ENCODE measurements at regions of chr7 and their contacts with region 1.

Region 1: GRCh38 chr7:95527033-95527775 is 41.5 kb downstream of the ASB4 start:
- DNase-seq: peak; percentile 77
- H3K4me3 ChIP-seq: no peak overlapping the region; a peak in 1 of 4 replicates
- H3K27ac ChIP-seq: no peak overlapping the region
- H3K4me1 ChIP-seq: peaks cover 0 to 3% of the 10 kb centered on the region in 2 experiments; a peak in 1 of 4 replicates
- H3K27me3 ChIP-seq: peaks cover 67% of the 10 kb centered on the region
- CTCF ChIP-seq: peak; percentile 99
- EP300 ChIP-seq: no peak
- RAD21 ChIP-seq: peak; percentile 94

Region 2: DNA sequence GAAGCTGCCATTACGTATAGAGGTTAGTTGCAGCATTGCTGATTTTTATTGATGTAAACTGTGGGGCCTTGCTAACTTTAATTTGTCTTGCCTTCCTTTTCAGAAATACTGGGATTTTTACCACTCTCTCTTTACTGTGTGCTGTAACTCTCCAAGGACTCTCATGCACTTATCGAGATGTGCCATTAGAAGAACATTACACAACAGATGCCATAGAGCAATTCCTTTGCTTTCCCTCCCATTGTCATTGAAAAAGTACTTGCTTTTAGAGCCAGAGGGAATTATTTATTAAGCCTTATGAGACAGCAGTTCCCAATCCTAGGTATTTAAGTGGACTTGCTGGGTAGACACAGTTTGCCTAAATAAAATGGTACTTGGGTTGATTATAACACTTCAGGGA is 10.3 kb after region 1 on chr7:
- CTCF ChIA-PET with region 1: interaction called, 20 read pairs
- POLR2A ChIA-PET with region 1: no interaction called
- DNase-seq: no peak
- H3K4me3 ChIP-seq: no peak overlapping the region
- H3K27ac ChIP-seq: no peak overlapping the region
- H3K4me1 ChIP-seq: no peaks in the 10 kb centered on the region
- H3K27me3 ChIP-seq: peaks cover 53% of the 10 kb centered on the region; the same call in 1 of the 2 replicates
- CTCF ChIP-seq: no peak
- EP300 ChIP-seq: no peak
- RAD21 ChIP-seq: no peak

Region 3: DNA sequence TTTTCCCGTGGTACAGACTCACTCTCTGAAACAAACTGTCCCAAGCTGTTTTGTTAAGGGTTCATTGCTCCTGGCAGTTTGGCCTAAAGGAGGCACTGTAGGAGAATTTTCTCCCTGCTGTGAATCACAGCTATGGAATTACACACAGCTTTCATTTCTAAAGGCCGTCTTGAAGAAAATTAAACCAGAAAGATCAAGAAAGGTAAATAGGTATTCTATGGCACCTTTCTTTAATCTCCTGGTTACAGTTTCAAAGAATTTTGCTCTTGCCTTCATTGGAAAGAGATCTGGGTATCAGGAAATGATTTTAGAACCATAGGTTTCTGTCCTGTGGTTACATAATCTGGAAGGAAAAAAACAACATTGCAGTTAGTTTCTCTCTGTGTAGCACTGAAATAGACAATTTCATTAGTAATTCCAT is 17.9 kb after region 1 on chr7:
- CTCF ChIA-PET with region 1: interaction called, 20 read pairs
- POLR2A ChIA-PET with region 1: no interaction called
- DNase-seq: no peak
- H3K4me3 ChIP-seq: peak overlapping the region; percentile 28 to 44; a peak in 3 of 4 replicates
- H3K27ac ChIP-seq: no peak overlapping the region
- H3K4me1 ChIP-seq: peaks cover 0 to 8% of the 10 kb centered on the region in 2 experiments; a peak in 2 of 4 replicates
- H3K27me3 ChIP-seq: peaks cover 30% of the 10 kb centered on the region; the same call in 1 of the 2 replicates
- CTCF ChIP-seq: peak; percentile 95
- EP300 ChIP-seq: no peak
- RAD21 ChIP-seq: peak; percentile 57

Region 4: DNA sequence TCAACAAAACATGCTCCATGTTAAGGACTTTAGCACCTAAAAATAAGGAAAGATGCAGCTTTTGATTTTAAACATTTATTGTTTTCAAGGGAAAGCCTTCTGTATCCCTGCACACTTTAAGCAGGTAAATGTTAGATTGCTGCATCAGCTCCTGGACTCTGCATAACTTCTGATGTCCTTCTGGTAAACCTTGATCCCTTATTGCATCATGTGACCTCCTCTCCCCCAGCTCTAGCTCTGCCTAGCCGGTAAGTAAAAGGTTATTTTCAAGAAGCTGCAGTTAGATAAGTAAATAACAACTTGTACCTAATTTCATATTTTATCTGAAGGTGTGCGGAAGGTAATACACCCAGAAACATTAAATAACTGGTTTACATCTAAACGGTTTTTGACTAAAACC is 31.7 kb after region 1 on chr7:
- CTCF ChIA-PET with region 1: interaction called, 10 read pairs
- POLR2A ChIA-PET with region 1: no interaction called
- DNase-seq: no peak
- H3K4me3 ChIP-seq: no peak overlapping the region
- H3K27ac ChIP-seq: no peak overlapping the region
- H3K4me1 ChIP-seq: no peaks in the 10 kb centered on the region
- H3K27me3 ChIP-seq: peaks cover 34% of the 10 kb centered on the region
- CTCF ChIP-seq: no peak
- EP300 ChIP-seq: no peak
- RAD21 ChIP-seq: no peak

Region 5: DNA sequence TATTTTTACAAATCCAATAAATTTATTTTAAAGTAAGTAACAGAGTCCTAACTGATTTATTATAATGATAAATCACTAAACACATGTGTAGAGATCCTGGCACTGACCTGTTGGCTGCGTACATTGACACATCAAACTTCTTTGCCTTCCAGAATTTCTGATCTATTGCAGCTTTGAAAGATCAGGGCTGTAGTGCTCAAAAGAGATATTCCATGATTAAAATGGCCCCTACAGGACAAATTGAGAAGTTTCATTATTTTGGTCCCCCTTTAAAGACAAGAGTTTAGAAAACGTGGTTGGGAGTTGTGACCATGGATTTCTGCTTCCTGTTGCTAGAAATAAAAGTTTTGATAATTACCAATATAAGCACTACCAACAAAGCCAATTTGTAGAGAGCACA is 156.8 kb after region 1 on chr7:
- CTCF ChIA-PET with region 1: interaction called, 530 read pairs
- POLR2A ChIA-PET with region 1: no interaction called
- DNase-seq: no peak
- H3K4me3 ChIP-seq: no peak overlapping the region
- H3K27ac ChIP-seq: no peak overlapping the region
- H3K4me1 ChIP-seq: no peaks in the 10 kb centered on the region
- H3K27me3 ChIP-seq: no peaks in the 10 kb centered on the region; the same call in 1 of the 2 replicates
- CTCF ChIP-seq: peak; percentile 60
- EP300 ChIP-seq: no peak
- RAD21 ChIP-seq: peak; percentile 37

Region 6: DNA sequence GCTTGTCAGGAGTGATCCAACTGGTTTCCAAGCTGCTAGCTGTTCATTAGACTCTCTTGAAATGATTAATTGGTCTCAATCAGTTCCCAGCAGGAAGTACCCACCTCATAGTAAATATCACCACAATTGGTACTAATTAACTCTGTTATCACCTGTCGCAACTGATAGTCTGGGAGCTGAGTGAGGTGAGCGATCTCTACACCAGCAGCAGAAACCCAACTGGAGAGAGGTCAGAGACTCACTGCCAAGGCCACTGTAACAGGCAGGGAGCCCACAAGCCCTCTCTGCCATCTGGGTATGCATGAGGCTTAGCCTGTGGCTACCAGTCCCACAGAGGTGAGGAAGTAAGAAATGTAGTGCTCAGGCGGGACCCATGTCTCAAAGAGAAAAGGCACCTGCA is 490.7 kb after region 1 on chr7:
- CTCF ChIA-PET with region 1: no interaction called
- POLR2A ChIA-PET with region 1: no interaction called
- DNase-seq: no peak
- H3K4me3 ChIP-seq: no peak overlapping the region
- H3K27ac ChIP-seq: no peak overlapping the region
- H3K4me1 ChIP-seq: no peaks in the 10 kb centered on the region; a peak in 1 of 4 replicates
- H3K27me3 ChIP-seq: no peaks in the 10 kb centered on the region
- CTCF ChIP-seq: no peak
- EP300 ChIP-seq: no peak
- RAD21 ChIP-seq: no peak